WTC11 (cell line): ENCODE measurements at regions of chr2 and their contacts with region 1.

Region 1: GRCh38 chr2:126971481-126972278 is 73.0 kb downstream of the TEX51 start:
- DNase-seq: peak; percentile 86
- ATAC-seq: peak; percentile 88
- H3K4me3 Mint-ChIP-seq: peak overlapping the region; percentile 14; the same call in 1 of the 2 replicates
- H3K27ac Mint-ChIP-seq: no peak overlapping the region
- H3K4me1 Mint-ChIP-seq: peaks cover 10% of the 10 kb centered on the region
- H3K27me3 Mint-ChIP-seq: peaks cover 45% of the 10 kb centered on the region
- CTCF ChIP-seq: peak; percentile 96

Region 2: DNA sequence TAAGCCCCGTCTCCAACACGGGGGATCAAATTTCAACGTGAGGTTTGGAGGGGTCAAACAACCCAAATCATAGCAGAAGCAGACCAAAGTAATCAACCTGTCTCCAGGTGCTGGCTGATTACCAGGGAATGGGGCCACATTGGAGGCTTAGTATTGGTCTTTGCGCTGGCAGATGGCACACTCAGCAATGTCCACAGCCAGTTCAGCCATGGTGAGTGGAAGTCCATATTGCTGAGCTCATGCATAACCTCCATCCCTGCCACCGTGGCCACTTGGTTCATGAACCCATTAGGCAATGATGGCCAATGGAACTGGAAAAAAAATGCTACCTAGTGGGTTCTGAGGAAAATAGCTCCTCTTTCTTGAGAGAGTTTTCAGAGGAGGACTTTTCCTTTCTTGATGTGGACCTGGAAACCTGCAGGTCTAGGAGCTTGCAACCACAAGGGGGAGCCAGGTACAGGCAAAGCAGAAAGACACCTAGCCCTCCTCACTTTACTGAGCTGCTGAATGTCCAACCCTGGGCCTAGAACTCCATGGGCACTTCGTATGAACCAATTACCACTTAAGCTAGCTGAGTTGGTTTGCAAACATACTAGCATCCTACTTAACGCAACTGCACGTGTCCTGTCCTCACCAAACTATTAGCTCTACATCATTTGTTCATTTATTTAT is 443.7 kb before region 1 on chr2:
- CTCF ChIA-PET with region 1: interaction called, 31 read pairs
- POLR2A ChIA-PET with region 1: no interaction called
- DNase-seq: peak; percentile 68
- ATAC-seq: peak; percentile 91
- H3K4me3 Mint-ChIP-seq: no peak overlapping the region
- H3K27ac Mint-ChIP-seq: no peak overlapping the region
- H3K4me1 Mint-ChIP-seq: no peaks in the 10 kb centered on the region
- H3K27me3 Mint-ChIP-seq: peaks cover 7% of the 10 kb centered on the region
- CTCF ChIP-seq: peak; percentile 26; the same call in 1 of the 2 replicates

Region 3: GRCh38 chr2:126802774-126803433 is 168.8 kb before region 1 on chr2:
- CTCF ChIA-PET with region 1: interaction called, 17 read pairs
- POLR2A ChIA-PET with region 1: no interaction called
- DNase-seq: no peak
- ATAC-seq: peak; percentile 59
- H3K4me3 Mint-ChIP-seq: no peak overlapping the region
- H3K27ac Mint-ChIP-seq: no peak overlapping the region
- H3K4me1 Mint-ChIP-seq: peaks cover 8% of the 10 kb centered on the region
- H3K27me3 Mint-ChIP-seq: no peaks in the 10 kb centered on the region; the same call in 1 of the 2 replicates
- CTCF ChIP-seq: no peak

Region 4: GRCh38 chr2:126850940-126851339 is 120.7 kb before region 1 on chr2:
- CTCF ChIA-PET with region 1: interaction called, 16 read pairs
- POLR2A ChIA-PET with region 1: no interaction called
- DNase-seq: no peak
- ATAC-seq: 0 out of 2 replicates have a peak, but pooled peaks have one; percentile 22
- H3K4me3 Mint-ChIP-seq: no peak overlapping the region
- H3K27ac Mint-ChIP-seq: no peak overlapping the region
- H3K4me1 Mint-ChIP-seq: no peaks in the 10 kb centered on the region
- H3K27me3 Mint-ChIP-seq: peaks cover 5% of the 10 kb centered on the region
- CTCF ChIP-seq: no peak

Region 5: DNA sequence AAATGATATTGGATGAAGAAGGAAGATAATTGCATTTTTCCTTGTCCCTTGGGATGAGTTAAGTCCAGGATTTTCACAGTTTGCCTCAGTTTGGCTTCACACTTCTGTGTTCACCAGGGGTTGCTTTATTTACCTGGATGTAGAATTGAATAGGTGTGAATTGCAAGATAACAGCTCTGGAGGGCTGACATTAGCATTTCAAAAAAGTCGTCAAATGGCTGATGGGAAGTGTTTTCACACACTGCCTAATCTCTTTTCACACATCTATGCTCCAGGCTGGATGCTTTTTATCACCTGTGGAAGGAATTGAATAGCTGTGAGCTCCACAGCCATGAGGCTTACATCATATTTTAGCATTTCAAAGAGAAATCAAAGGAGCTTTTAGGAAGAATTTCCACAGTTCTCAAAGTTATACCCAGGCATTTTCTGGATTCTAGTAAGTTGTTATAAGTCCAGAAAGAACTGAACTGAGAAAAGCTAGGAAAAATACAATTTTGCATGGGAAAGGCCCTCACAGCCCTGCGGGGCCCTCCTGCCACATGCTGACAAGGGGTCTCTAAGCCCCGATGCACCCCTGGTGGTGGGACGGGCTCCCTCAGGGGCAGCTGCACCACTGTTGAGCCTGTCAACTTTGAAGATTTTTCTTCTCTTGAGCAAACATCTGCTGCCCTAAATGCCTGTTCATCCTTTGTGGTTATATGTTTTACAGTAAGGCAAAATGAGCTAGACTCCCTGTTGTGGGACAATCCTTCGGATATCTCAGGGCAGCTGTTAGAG is 29.1 kb before region 1 on chr2:
- CTCF ChIA-PET with region 1: interaction called, 10 read pairs
- POLR2A ChIA-PET with region 1: no interaction called
- DNase-seq: peak; percentile 41
- ATAC-seq: peak; percentile 75
- H3K4me3 Mint-ChIP-seq: no peak overlapping the region
- H3K27ac Mint-ChIP-seq: no peak overlapping the region
- H3K4me1 Mint-ChIP-seq: peaks cover 44% of the 10 kb centered on the region
- H3K27me3 Mint-ChIP-seq: peaks cover 100% of the 10 kb centered on the region
- CTCF ChIP-seq: no peak

Region 6: DNA sequence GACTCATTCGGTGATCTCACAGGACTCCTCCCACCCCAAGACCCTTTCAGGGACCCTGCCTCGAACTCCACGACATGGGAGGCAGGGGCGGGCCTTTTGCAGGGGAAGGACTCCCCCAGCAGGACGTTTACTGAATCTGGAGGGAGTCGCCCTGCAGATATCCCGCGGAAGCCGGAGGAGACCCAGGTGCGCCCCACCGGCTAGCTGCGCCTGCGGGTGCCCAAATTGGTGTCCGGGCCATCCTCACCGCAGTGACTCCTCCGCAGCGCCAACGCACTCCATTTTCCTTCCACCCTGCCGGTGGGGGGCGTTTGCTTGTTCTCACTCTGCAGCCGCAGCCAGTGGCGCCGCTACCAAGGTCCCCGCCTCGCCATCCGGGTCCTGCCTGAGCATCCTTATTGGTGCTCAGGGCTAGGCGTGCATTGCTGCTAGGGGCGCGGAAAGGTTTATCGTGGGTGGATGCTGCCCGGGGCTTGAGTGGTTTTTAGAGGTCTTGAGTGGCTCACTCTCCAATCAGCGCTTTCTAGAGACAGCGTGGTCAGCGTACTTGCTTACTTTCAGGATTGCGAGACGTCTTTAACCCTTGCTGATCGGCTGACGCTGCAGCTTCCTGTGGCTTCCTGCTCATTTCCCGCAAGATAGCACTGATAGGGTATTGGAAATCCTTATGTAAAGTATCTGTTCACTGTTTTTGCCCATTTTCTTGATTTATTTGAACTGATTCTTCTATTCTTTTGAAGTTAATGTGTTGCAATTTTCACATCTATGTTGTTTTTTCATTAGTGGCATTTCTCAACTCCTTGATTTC is 53.9 kb after region 1 on chr2:
- CTCF ChIA-PET with region 1: interaction called, 14 read pairs
- POLR2A ChIA-PET with region 1: no interaction called
- DNase-seq: peak; percentile 83
- ATAC-seq: peak; percentile 73
- H3K4me3 Mint-ChIP-seq: peak overlapping the region; percentile 77
- H3K27ac Mint-ChIP-seq: no peak overlapping the region; the same call in 1 of the 2 replicates
- H3K4me1 Mint-ChIP-seq: peaks cover 9% of the 10 kb centered on the region
- H3K27me3 Mint-ChIP-seq: peaks cover 12% of the 10 kb centered on the region
- CTCF ChIP-seq: 0 out of 2 replicates have a peak, but pooled peaks have one; percentile 30